ENCODE measurements at regions of chr15 and their contacts with region 1.

Region 1: GRCh38 chr15:70679919-70680231 is 83.5 kb downstream of the UACA start:
- DNase-seq: no peak
- ATAC-seq: no peak

Region 2: DNA sequence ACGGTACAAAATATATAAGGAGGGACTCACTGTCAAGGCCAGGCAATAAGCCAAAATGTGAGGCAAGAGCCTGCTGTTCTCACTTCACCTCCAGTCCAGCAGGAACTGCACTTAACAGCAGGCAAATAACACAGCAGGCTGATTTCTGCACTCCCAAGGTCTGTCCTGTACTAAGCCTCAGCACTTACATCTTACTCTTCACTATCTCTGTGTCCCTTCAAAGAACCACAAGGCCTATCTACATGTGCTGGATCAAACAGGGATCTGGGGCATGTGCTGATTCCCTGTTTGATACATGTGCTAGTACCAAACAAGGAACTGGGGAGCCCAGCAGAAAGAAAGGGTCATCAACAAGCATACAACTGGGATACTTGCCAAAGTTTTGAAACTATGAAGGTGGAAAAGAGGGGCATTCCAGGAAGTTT is 61.2 kb after region 1 on chr15:
- intact Hi-C with region 1: no loop called
- DNase-seq: peak; percentile 62
- ATAC-seq: peak; percentile 93

Region 3: DNA sequence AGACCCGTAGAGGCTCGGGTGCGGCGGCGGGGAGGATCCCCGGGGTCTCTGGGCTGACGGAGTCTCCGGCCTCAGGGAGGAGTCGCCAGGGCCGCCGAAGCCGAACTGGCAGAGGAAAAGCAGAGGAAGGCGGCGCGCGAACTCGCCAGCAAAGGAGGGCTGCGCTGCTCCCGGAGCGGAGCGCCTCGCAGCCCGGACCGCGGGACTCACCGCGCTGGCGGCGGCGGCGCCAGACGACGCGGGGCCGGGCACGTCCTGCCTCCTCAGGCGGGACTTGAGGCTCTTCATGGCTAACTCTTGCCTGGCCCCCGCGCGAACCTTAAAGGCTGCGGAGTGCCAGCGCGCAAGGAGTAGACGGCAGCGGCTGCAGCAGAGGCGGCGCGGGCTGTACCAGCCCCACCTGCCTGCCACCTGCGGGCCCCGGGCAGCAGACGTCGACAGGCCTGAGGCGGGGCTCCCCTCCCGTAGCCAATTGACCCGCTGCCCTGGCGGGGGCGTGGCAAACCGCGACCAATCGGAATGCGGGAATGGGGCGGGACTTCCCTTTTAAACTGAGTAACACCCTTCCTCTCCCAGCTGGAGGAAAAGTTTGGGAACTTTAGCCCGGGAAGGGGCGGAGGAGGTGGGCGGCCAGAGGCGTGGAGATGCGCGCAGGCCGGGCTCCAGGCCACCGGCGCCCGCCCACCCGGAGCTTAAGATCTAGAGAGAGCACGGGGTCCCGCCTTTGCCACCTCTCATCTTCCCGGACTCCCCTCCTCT is 83.4 kb after region 1 on chr15 and contains the start of gene UACA:
- intact Hi-C with region 1: loop called (anchors 5 kb)
- DNase-seq: peak; percentile 95
- ATAC-seq: peak; percentile 99
- total RNA-seq, gene UACA: 25.8 TPM

Region 4: GRCh38 chr15:70810916-70811578 is 131.2 kb after region 1 on chr15:
- intact Hi-C with region 1: loop called (anchors 1 kb)
- DNase-seq: no peak
- ATAC-seq: peak; percentile 29

Region 5: GRCh38 chr15:70875001-70875782 is 195.3 kb after region 1 on chr15:
- intact Hi-C with region 1: loop called (anchors 5 kb)
- DNase-seq: no peak
- ATAC-seq: peak; percentile 50

Measured in Right ventricle myocardium inferior (tissue), 1 donor.